ENCODE measurements at regions of chr10 and their contacts with region 1.

Region 1: GRCh38 chr10:84264611-84265141 is 19.8 kb downstream of the RGR start:
- DNase-seq: peak; percentile 86
- H3K4me3 Mint-ChIP-seq: no peak overlapping the region
- H3K27ac Mint-ChIP-seq: no peak overlapping the region
- H3K4me1 Mint-ChIP-seq: peaks cover 29% of the 10 kb centered on the region
- H3K27me3 Mint-ChIP-seq: peaks cover 25% of the 10 kb centered on the region

Region 2: DNA sequence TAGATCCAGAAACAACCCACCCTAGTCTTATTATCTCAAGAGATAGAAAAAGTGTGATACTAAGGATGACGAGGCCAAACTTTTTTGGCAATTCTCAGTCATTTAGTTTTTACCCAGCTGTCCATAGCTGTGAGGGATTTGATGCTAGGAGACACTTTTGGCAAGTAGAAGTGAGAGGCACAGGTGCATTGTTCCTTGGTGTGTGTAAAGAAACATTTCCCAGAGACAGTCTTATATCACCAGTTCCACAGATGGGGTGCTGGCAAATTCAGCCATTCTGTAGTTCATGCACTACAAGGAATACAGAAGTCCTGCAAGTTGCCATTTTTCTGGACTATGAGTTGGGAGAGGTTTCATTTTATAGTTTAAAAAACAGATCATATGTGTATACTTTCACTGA is 528.7 kb before region 1 on chr10:
- CTCF ChIA-PET with region 1: no interaction called
- intact Hi-C with region 1: no loop called
- DNase-seq: no peak
- H3K4me3 Mint-ChIP-seq: no peak overlapping the region
- H3K27ac Mint-ChIP-seq: no peak overlapping the region
- H3K4me1 Mint-ChIP-seq: no peaks in the 10 kb centered on the region
- H3K27me3 Mint-ChIP-seq: no peaks in the 10 kb centered on the region

Region 3: DNA sequence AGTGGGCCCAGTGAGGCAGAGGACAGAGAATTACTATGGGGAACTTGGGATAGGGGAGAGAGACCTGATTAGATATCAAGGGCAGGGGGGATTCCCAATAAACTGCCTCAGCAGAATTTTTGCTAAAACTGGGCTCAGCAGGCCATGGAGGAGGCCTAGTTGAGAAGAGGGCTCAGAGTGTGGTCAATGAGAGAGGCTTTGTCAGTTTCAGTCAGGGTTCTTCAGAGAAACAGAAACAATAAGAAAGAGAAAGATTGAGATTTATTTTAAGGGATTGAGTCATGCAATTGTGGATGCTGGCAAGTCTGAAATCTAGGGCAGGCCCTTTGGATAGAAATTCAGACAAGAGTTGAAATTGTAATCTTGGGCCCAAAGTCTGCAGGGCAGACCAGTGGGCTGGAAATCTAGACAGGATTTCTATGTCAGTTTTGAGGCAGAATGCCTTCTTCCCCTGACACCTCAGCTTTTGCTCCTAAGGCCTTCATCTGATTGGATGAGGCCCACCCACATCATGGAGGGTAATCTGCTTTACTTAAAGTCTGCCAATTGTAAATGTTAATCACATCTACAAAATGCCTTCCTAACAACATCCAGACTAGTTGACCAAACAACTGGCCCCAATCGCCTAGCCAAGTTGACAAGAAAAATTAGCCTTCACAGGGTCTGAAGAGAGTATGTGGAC is 30.2 kb after region 1 on chr10:
- CTCF ChIA-PET with region 1: interaction called, 7 read pairs
- intact Hi-C with region 1: loop called (anchors 1 kb)
- DNase-seq: peak; percentile 27
- H3K4me3 Mint-ChIP-seq: no peak overlapping the region
- H3K27ac Mint-ChIP-seq: no peak overlapping the region
- H3K4me1 Mint-ChIP-seq: peaks cover 21% of the 10 kb centered on the region
- H3K27me3 Mint-ChIP-seq: peaks cover 3% of the 10 kb centered on the region

Region 4: DNA sequence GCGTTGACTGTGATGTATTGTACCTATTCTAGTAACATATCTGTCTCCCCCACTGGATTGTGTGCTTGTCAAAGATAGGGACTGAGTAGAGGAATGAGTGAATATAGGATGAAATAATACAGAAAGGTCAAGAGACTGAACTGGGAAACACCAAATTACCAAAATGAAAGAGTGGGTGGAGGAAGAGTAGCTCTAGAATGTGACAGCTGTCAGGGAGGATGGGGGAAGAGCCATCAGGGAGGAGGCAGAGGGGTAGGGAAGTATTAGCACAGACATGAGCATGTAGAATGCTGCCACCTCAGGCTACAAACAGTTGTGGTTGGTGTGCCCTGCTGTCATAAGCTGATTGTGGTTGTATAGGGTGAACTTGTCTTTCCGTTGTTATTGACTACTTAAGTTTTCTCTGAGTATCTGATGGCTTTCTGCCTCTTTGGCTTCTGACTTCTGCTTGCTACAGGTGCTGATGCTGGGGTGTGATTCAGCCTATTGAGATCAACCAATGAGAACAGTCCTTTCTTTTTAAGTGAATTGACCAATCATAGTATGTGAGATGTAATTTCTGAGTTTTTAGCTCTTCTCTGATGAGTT is 69.3 kb after region 1 on chr10:
- CTCF ChIA-PET with region 1: interaction called, 15 read pairs
- intact Hi-C with region 1: loop called (anchors 1 kb)
- DNase-seq: peak; percentile 79
- H3K4me3 Mint-ChIP-seq: peak overlapping the region; percentile 56
- H3K27ac Mint-ChIP-seq: peak overlapping the region; percentile 82
- H3K4me1 Mint-ChIP-seq: peaks cover 35% of the 10 kb centered on the region
- H3K27me3 Mint-ChIP-seq: no peaks in the 10 kb centered on the region

Region 5: DNA sequence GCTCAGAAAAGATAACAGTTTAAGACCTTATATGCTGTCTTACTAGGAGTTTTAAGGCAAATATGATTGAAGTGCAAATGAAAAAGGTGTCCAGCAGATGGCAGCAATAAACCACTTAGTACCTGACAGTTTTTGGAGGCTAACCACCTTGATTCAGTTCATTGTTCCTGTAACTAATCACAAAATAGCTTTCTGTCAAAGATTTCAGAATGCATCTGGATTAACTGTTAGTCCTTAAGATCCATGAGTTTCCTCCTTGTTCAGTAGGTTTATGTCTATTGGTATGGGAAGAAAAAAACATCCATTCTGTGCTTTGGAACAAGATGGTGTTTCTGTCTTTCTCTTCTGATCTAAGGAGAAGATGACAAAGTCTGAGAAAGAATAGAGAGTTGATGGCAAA is 110.3 kb after region 1 on chr10:
- CTCF ChIA-PET with region 1: interaction called, 5 read pairs
- intact Hi-C with region 1: loop called (anchors 1 kb)
- DNase-seq: peak; percentile 70
- H3K4me3 Mint-ChIP-seq: no peak overlapping the region
- H3K27ac Mint-ChIP-seq: peak overlapping the region; percentile 30
- H3K4me1 Mint-ChIP-seq: peaks cover 45% of the 10 kb centered on the region
- H3K27me3 Mint-ChIP-seq: no peaks in the 10 kb centered on the region

Region 6: DNA sequence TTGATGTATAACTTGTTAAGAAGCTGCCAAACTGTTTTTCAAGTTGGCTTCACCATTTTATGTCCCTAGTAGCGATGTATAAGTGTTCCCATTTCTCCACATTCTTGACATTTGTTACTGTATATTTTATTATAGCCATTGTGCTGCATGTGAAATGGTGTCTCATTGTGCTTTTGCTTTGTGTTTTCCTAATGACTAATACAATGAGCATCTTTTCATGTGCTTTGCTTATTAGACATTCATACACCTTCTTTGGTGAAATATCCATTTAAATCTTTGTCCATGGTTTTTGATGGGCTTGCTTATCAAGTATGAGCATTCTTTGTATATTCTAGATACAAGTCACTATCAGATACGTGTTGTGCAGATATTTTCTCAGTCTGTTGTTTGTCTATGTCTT is 266.7 kb after region 1 on chr10:
- CTCF ChIA-PET with region 1: interaction called, 261 read pairs
- intact Hi-C with region 1: no loop called
- DNase-seq: no peak
- H3K4me3 Mint-ChIP-seq: no peak overlapping the region
- H3K27ac Mint-ChIP-seq: no peak overlapping the region
- H3K4me1 Mint-ChIP-seq: peaks cover 13% of the 10 kb centered on the region
- H3K27me3 Mint-ChIP-seq: no peaks in the 10 kb centered on the region

Measured in activated naive CD4-positive, alpha-beta T cell treated with anti-CD3 and anti-CD28 coated beads for 36 hours (primary cell).